ENCODE measurements at regions of chr18 and their contacts with region 1.

Region 1: DNA sequence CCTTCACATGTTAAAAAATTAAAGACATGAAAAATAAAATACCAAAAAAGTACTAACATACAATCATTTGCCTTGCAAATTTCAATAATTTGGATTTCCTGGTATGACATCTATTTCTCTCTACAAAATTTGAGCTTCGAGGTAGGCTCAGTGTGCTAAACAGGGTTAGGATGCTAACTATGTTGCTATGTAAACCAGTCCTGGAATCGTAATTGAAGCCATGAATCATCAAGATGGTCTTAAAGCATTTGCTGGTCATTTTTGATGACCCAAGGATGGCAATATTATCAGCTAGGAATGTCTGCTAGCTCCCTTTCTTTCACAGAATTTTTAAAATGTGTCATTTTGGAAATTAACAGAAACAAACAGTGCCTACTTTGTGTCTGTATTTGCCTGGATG is 107.9 kb upstream of the TTC39C start:
- DNase-seq: no peak
- ATAC-seq: no peak
- H3K4me3 ChIP-seq: no peak overlapping the region
- H3K27ac ChIP-seq: no peak overlapping the region
- H3K4me1 ChIP-seq: no peaks in the 10 kb centered on the region
- H3K27me3 ChIP-seq: no peaks in the 10 kb centered on the region
- CTCF ChIP-seq: no peak
- EP300 ChIP-seq: no peak
- POLR2A ChIP-seq: no peak
- RAD21 ChIP-seq: no peak

Region 2: DNA sequence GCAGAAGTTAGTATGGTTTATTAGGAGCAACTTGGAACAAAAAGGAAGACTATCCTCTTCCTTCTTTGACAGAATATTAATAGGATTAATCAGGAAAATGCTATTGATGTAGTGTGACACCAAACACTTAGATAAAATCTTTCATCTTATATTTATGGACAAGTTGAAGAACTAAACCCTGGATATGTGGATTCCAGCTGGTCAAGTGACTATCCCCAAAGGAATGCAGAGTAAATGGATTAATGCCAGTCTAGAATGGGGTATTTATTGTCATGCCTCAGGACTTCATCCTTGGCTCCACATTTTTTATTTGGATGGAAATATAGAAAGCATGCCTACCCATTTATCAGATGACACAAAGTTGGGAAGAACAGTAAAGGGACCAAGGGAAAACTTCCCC is 16.1 kb before region 1 on chr18:
- CTCF ChIA-PET with region 1: interaction called, 3 read pairs
- POLR2A ChIA-PET with region 1: no interaction called
- RAD21 ChIA-PET with region 1: no interaction called
- SMC1A ChIA-PET with region 1: no interaction called
- in situ Hi-C with region 1: no loop called
- intact Hi-C with region 1: loop called (anchors 2 kb)
- DNase-seq: no peak
- ATAC-seq: no peak
- H3K4me3 ChIP-seq: no peak overlapping the region
- H3K27ac ChIP-seq: no peak overlapping the region
- H3K4me1 ChIP-seq: no peaks in the 10 kb centered on the region
- H3K27me3 ChIP-seq: no peaks in the 10 kb centered on the region; a peak in 2 of 4 replicates
- CTCF ChIP-seq: no peak
- EP300 ChIP-seq: no peak
- POLR2A ChIP-seq: no peak
- RAD21 ChIP-seq: no peak

Measured in GM12878 (cell line).